ENCODE measurements at regions of chr1 and their contacts with region 1.

Region 1: DNA sequence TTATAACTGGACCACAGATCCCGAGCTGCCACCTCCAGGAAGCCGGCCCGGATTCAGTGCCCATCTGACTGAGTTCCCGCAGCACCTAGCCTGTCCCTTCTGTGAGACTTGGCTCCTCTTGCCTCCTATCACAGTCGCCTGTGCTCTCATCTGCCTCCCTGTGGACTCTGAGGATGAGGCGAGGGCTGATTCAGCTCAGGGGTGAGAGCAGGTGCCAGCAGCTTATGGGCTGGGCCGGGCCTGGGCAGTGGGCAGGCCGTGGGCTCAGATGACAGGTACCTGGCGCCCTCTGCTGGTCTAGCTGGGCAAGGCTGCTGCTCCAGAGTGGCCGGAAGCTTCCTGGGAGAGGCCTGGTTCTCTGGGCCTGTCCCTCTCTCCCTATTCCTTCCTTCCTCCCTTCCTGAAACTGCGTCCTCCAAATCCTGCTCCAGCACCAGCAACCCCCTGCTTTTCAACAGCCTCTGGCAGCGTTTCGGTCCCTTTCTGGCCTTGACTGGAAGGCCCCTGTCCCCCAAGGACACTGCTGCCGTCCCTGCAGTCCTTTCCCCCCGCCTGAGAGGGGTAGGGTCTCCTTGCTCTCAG is 17.3 kb upstream of the PCSK9 start:
- DNase-seq: peak; percentile 93
- ATAC-seq: peak; percentile 100
- H3K4me3 ChIP-seq: no peak overlapping the region
- H3K27ac ChIP-seq: no peak overlapping the region
- H3K4me1 ChIP-seq: peaks cover 0 to 13% of the 10 kb centered on the region in 2 experiments; a peak in 3 of 4 replicates
- H3K27me3 ChIP-seq: no peaks in the 10 kb centered on the region; the same call in 1 of the 2 replicates
- CTCF ChIP-seq: peak in 2 of 3 experiments; percentile 95 to 98
- POLR2A ChIP-seq: no peak
- RAD21 ChIP-seq: peak; percentile 97

Region 2: GRCh38 chr1:54800899-54801759 is 220.9 kb before region 1 on chr1 and contains the start of gene TTC22:
- CTCF ChIA-PET with region 1: interaction called, 3 read pairs
- POLR2A ChIA-PET with region 1: no interaction called
- RAD21 ChIA-PET with region 1: no interaction called
- intact Hi-C with region 1: loop called (anchors 10 kb)
- DNase-seq: peak; percentile 24
- ATAC-seq: peak; percentile 97
- H3K4me3 ChIP-seq: peak within 1 kb of the TSS; percentile 43 to 54
- H3K27ac ChIP-seq: peak within 1 kb of the TSS; percentile 34; the same call in 1 of the 2 replicates
- H3K4me1 ChIP-seq: peaks cover 3 to 24% of the 10 kb centered on the region in 2 experiments; a peak in 3 of 4 replicates
- H3K27me3 ChIP-seq: no peaks in the 10 kb centered on the region
- CTCF ChIP-seq: peak; percentile 57 to 75 (median 63)
- POLR2A ChIP-seq: no peak
- RAD21 ChIP-seq: peak; percentile 60
- total RNA-seq, gene TTC22: 1.8 TPM

Region 3: DNA sequence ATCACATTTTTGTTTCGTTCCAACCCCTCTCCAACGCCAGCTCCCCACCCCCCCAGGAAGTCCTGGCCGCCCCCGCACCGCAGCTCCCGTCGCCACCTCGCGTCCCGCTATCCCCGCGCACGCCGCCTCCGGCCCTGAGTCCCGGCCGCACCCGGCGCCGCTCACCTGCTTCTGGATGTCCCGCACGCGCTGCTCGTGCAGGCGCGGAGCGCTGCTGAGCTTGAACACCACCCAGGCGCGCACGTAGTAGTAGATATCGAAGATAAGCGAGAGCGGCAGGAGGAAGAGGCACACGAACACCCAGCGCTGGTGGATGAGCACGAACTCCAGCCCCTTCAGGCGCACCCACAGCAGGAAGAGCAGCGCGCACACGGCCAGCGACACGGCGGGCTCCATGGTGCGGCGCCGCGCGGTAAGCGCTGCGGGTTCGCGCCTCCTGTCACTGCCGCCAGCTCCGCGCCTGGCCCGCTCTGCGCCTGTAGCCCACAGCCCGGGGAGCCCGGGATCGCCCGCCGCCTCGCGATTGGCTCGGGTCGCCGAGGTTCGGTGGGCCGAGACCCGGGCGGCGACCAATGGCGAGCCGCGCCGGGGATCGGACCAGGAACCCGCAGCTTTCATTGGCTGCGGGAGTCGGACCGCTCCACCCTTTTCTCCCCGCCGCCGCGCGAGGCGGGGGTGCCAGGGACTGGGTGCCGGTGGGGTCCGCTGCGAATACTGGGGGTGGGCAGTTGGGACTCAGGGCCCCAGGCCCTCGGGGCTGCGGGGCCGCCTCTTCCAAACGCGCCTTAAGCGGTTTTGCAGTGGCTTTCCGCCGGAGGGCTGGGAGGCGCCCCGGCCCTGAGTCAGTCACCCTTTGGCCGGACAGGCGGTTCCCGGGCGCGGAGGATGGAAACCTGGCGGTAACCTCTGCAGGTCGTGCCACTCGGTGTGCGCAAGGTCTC is 135.1 kb before region 1 on chr1 and contains the start of gene DHCR24:
- CTCF ChIA-PET with region 1: interaction called, 13 read pairs
- POLR2A ChIA-PET with region 1: no interaction called
- RAD21 ChIA-PET with region 1: no interaction called
- intact Hi-C with region 1: no loop called
- DNase-seq: peak; percentile 43
- ATAC-seq: peak; percentile 94
- H3K4me3 ChIP-seq: peak within 1 kb of the TSS; percentile 85 to 93
- H3K27ac ChIP-seq: peak within 1 kb of the TSS; percentile 93
- H3K4me1 ChIP-seq: peaks cover 10 to 50% of the 10 kb centered on the region in 2 experiments; a peak in 3 of 4 replicates
- H3K27me3 ChIP-seq: no peaks in the 10 kb centered on the region
- CTCF ChIP-seq: no peak
- POLR2A ChIP-seq: peak; percentile 49
- RAD21 ChIP-seq: no peak
- total RNA-seq, gene DHCR24: 132 TPM

Region 4: DNA sequence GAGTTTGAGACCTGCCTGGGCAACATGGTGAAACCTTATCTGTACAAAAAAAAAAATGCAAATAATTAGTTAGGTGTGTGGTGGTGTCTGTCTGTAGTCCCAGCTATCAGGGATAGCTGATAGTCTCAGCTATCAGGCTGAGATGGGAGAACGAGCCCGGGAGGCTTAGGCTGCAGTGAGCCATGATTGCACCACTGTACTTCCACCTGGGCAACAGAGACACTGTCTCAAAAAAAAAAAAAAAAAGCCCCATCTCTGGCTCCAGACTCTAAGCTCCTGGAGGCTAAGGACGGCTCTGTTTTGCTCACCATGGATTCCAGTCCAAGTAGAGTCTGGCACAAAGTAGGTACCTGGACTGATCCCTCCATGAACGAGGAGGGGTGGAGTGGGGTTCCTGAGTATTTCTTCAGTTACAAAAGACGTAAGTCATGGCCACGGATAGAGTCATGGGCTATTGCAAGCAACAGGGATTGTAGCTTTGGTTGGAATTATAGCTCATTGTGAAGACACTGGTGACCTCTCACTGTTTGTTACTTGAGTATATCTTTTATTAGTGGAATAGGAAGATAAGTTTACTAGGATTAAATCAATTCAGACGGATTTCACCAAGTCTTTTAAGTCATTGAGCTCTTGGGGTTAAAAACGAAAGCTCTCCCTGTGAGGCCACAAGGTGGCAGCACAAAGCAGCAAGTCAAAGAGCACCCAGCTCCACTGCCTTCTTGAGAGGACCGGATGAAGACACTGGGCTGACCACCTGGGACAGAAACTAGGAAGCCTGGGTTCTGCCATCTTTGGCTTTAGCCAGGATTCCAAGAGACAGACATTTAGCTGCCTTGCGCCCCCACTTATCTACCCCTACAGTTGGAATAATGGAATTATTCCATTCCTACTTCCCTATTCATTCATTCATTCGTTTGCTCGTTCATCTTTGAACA is 77.2 kb before region 1 on chr1:
- CTCF ChIA-PET with region 1: interaction called, 145 read pairs
- POLR2A ChIA-PET with region 1: interaction called, 17 read pairs
- RAD21 ChIA-PET with region 1: interaction called, 23 to 30 read pairs
- intact Hi-C with region 1: loop called (anchors 1 kb)
- DNase-seq: peak; percentile 83
- ATAC-seq: peak; percentile 95
- H3K4me3 ChIP-seq: peak overlapping the region; percentile 15 to 45; a peak in 3 of 4 replicates
- H3K27ac ChIP-seq: no peak overlapping the region
- H3K4me1 ChIP-seq: peaks cover 3 to 8% of the 10 kb centered on the region in 2 experiments; a peak in 3 of 4 replicates
- H3K27me3 ChIP-seq: no peaks in the 10 kb centered on the region
- CTCF ChIP-seq: peak; percentile 86 to 96 (median 89)
- POLR2A ChIP-seq: no peak
- RAD21 ChIP-seq: peak; percentile 92

Region 5: DNA sequence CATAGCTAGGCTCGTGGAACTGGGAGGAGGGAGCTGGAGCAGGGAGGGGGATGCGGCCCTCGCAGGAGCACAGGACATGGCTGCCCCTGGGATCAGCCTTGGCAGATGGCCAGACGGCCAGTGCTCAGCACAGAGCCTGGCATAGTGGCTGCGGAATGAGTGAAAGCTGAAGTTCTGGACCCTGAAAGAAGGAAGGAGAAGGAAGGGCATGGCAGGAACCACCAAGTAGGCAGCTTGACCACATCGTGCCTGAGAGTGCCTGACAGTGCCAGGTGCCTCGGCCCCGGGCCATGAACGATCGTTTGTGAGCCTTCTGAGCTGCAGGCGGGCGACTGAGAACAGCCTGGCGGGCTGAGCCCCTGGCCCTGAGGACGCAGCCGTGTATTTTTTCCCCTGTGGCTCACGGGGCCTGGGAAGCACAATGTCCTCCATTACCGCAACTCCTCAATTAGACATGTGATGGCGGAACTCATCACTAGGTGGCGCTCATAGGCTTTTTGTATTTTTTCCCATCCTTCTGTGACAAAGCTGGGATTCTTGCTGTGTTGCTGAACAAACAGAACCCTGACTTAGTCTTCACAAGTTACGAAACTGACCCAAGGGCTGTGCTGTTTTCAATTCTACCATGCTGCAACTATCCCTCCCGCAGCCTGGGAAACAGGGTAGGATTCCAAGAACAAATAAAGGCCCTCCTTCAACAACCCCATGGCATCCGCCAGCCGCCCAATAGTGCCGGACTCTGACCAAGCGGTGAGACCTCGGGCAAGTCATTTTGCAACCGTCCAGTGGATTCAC is 71.5 kb before region 1 on chr1:
- CTCF ChIA-PET with region 1: interaction called, 145 read pairs
- POLR2A ChIA-PET with region 1: interaction called, 17 read pairs
- RAD21 ChIA-PET with region 1: interaction called, 23 to 30 read pairs
- intact Hi-C with region 1: loop called (anchors 1 kb)
- DNase-seq: peak; percentile 60
- ATAC-seq: peak; percentile 84
- H3K4me3 ChIP-seq: peak overlapping the region in 1 of 2 experiments; percentile 8; a peak in 1 of 4 replicates
- H3K27ac ChIP-seq: no peak overlapping the region; the same call in 1 of the 2 replicates
- H3K4me1 ChIP-seq: peaks cover 6 to 31% of the 10 kb centered on the region in 2 experiments
- H3K27me3 ChIP-seq: no peaks in the 10 kb centered on the region
- CTCF ChIP-seq: peak; percentile 68 to 95 (median 74)
- POLR2A ChIP-seq: no peak
- RAD21 ChIP-seq: peak; percentile 97

Region 6: GRCh38 chr1:54965624-54966340 is 56.3 kb before region 1 on chr1:
- CTCF ChIA-PET with region 1: interaction called, 11 read pairs
- POLR2A ChIA-PET with region 1: no interaction called
- RAD21 ChIA-PET with region 1: no interaction called
- intact Hi-C with region 1: no loop called
- DNase-seq: peak; percentile 35
- ATAC-seq: peak; percentile 84
- H3K4me3 ChIP-seq: no peak overlapping the region
- H3K27ac ChIP-seq: no peak overlapping the region
- H3K4me1 ChIP-seq: peaks cover 10 to 35% of the 10 kb centered on the region in 2 experiments
- H3K27me3 ChIP-seq: no peaks in the 10 kb centered on the region
- CTCF ChIP-seq: no peak
- POLR2A ChIP-seq: no peak
- RAD21 ChIP-seq: no peak

Region 7: DNA sequence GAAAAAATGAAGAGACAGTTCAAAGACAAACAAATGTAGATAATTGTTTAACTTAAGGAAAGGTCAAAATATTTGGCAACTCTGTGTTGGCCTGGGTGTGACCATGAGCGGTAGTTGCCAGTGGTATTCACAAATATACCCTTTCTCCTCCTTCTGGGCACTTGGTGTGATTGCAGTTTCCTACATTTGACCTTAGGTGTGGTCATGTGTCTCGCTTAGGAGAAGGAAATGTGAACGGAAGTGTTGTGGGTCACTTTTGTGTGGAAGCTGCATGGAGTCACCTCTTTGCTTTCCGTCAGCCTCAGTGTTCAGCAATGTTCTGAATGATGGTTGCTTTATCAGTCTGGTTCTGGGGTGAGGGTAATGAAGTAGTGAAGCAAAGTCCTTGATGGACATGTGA is 13.8 kb after region 1 on chr1:
- CTCF ChIA-PET with region 1: interaction called, 24 read pairs
- POLR2A ChIA-PET with region 1: no interaction called
- RAD21 ChIA-PET with region 1: no interaction called
- intact Hi-C with region 1: no loop called
- DNase-seq: peak; percentile 34
- ATAC-seq: no peak; the same call in 1 of the 2 replicates
- H3K4me3 ChIP-seq: no peak overlapping the region
- H3K27ac ChIP-seq: no peak overlapping the region
- H3K4me1 ChIP-seq: peaks cover 14 to 42% of the 10 kb centered on the region in 2 experiments; a peak in 3 of 4 replicates
- H3K27me3 ChIP-seq: no peaks in the 10 kb centered on the region
- CTCF ChIP-seq: peak; percentile 19 to 39 (median 34); a peak in 3 of 6 replicates
- POLR2A ChIP-seq: no peak
- RAD21 ChIP-seq: no peak